Gastrocnemius medialis (tissue), 4 donors: ENCODE measurements at regions of chr10 and their contacts with region 1.

Region 1: GRCh38 chr10:112842832-112843360 is 107.2 kb upstream of the TCF7L2 start:
- DNase-seq: no peak
- ATAC-seq: peak; percentile 33 to 44
- H3K4me3 ChIP-seq: no peak overlapping the region
- H3K27ac ChIP-seq: no peak overlapping the region
- H3K4me1 ChIP-seq: peaks cover 9 to 12% of the 10 kb centered on the region in 2 donors
- H3K27me3 ChIP-seq: no peaks in the 10 kb centered on the region
- CTCF ChIP-seq: no peak
- POLR2A ChIP-seq: no peak

Region 2: DNA sequence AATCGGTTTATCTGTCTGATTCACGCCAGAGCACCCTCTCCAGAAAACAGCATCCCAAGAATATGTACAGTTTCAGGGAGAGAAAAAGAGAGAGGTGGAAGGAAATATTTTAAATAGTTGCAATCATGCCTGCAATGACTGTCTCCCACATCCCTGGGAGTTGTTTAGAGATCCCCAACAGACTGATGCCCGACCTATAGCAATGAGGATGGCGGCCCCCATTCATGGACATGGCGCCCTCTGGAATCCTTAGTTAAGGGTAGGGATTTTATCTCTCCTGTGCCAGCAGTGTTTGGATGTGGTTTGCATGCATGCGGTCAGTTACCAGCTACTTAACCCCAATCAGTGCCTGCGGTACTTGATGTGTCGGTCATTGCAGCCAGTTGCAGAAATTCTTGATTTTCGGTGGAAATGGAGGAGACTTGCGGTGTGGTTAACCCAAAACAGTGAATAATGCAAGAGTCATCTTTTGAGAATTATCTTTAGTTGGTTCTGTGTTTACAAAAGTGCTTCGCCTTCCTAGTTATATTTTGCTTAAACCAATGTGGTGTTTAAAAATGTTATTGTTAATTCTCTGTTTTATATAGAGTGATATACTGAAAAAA is 78.9 kb before region 1 on chr10:
- in situ Hi-C with region 1: no loop called
- intact Hi-C with region 1: no loop called
- DNase-seq: no peak
- ATAC-seq: no peak
- H3K4me3 ChIP-seq: no peak overlapping the region
- H3K27ac ChIP-seq: no peak overlapping the region
- H3K4me1 ChIP-seq: no peaks in the 10 kb centered on the region
- H3K27me3 ChIP-seq: no peaks in the 10 kb centered on the region
- CTCF ChIP-seq: no peak
- POLR2A ChIP-seq: no peak

Region 3: DNA sequence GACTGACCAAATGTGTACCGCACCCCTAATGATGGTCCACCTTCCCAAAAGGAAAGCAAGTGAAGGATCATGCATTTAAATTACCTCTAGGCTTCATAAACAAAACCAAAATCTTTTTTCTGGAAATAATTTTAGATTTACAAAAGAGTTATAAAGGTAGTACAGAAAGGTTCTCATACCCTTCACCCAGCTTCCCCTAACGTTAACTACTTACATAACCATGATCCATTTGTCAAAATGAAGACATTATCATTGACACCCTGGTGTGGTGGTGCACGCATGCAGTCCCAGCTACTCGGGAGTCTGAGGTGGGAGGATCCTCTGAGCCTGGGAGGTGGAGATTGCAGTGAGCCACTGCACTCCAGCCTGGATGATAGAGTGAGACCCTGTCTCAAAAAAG is 32.1 kb after region 1 on chr10:
- in situ Hi-C with region 1: no loop called
- intact Hi-C with region 1: loop called (anchors 1 kb)
- DNase-seq: no peak
- ATAC-seq: no peak
- H3K4me3 ChIP-seq: no peak overlapping the region
- H3K27ac ChIP-seq: no peak overlapping the region
- H3K4me1 ChIP-seq: no peaks in the 10 kb centered on the region
- H3K27me3 ChIP-seq: no peaks in the 10 kb centered on the region
- CTCF ChIP-seq: no peak
- POLR2A ChIP-seq: no peak

Region 4: GRCh38 chr10:112953174-112954159 is 110.6 kb after region 1 on chr10:
- in situ Hi-C with region 1: no loop called
- intact Hi-C with region 1: no loop called
- DNase-seq: no peak
- ATAC-seq: no peak
- H3K4me3 ChIP-seq: peak overlapping the region; percentile 77 to 88 (median 82)
- H3K27ac ChIP-seq: peak overlapping the region; percentile 90 to 96 (median 94)
- H3K4me1 ChIP-seq: peaks cover 46 to 62% of the 10 kb centered on the region in 2 donors
- H3K27me3 ChIP-seq: no peaks in the 10 kb centered on the region
- CTCF ChIP-seq: no peak
- POLR2A ChIP-seq: no peak